Caco-2 (cell line): ENCODE measurements at regions of chr12 and their contacts with region 1.

Region 1: DNA sequence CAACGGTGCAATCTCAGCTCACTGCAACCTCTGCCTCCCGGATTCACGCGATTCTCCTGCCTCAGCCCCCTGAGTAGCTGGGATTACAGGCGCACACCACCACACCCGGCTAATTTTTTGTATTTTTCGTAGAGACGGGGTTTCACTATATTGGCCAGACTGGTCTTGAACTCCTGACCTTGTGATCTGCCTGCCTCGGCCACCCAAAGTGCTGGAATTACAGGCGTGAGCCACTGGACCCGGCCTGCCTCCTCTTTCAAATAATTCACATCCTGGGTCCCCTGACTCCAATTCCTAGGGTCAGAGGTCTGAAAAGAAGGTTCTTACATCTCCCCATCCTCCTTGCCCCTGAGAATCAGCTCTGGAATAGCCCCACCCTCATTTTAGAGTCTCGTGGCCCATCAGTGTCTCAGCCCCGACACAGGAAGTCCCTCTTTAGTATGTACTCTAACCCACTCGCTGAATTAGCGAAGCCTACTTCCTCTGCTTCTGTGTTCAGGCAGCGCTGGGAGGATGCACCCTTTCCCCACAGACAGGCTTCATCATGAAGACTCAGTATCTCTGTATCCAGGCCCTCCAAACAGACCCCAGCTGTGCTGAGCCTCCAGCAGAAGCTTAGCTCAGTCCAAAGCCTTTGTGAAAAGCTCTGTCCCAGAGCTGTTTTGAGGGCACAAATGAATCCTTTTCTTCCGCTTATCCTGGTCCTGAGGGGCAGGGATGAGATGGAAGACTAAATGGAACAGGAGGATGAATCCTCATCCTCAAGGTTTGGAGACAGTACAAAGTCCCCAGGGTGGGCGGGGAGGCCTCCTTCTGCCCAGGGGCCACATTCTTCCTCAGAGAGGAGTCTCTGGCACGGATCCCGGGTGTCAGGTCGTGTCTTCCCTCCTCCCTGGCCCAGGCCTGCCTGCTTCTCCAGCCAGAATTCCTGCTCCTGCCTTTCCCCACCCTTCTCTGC is 3.5 kb downstream of the LPAR5 start:
- DNase-seq: no peak
- H3K4me3 ChIP-seq: no peak overlapping the region
- H3K4me3 Mint-ChIP-seq: no peak overlapping the region
- H3K27ac Mint-ChIP-seq: no peak overlapping the region
- H3K4me1 ChIP-seq: peaks cover 10% of the 10 kb centered on the region
- H3K4me1 Mint-ChIP-seq: peaks cover 12% of the 10 kb centered on the region
- H3K27me3 ChIP-seq: no peaks in the 10 kb centered on the region
- H3K27me3 Mint-ChIP-seq: peaks cover 2% of the 10 kb centered on the region
- CTCF ChIP-seq: no peak

Region 2: DNA sequence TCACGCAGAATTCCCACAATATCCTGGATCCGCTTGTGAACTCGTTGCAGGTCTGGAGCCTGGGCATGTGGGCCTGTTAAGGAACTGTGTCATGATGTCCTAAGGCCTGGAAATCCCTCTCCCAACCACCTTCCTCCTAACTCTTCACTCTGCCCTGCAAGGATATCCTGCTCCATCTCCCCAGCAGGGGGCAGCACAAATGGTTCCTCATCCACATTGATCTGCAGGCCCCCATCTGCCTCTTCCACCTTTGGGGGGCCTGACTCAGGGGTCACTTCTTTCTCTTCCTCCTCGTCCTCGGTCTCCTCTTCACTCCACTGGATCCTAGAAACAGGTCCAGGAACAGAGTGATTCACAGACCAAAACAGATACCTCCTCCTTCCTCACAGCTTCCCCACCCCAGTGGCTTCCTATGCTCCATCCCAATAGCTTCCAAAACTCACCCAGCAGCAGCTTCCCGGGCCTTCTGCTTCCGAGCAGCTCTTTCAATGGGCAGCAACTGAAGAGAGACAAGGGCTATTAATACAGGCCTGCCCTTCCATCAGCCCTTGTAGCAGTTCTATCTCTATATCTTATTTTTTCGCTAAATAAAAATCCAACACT is 68.8 kb before region 1 on chr12:
- CTCF ChIA-PET with region 1: interaction called, 3 read pairs
- POLR2A ChIA-PET with region 1: interaction called, 10 read pairs
- intact Hi-C with region 1: no loop called
- DNase-seq: peak; percentile 63 to 80
- H3K4me3 ChIP-seq: no peak overlapping the region
- H3K4me3 Mint-ChIP-seq: no peak overlapping the region
- H3K27ac Mint-ChIP-seq: no peak overlapping the region
- H3K4me1 ChIP-seq: no peaks in the 10 kb centered on the region
- H3K4me1 Mint-ChIP-seq: peaks cover 9% of the 10 kb centered on the region
- H3K27me3 ChIP-seq: no peaks in the 10 kb centered on the region
- H3K27me3 Mint-ChIP-seq: no peaks in the 10 kb centered on the region
- CTCF ChIP-seq: peak; percentile 89 to 96

Region 3: GRCh38 chr12:6647083-6647604 is 14.8 kb after region 1 on chr12 and contains the start of gene ACRBP:
- CTCF ChIA-PET with region 1: no interaction called
- POLR2A ChIA-PET with region 1: no interaction called
- intact Hi-C with region 1: loop called (anchors 2 kb)
- DNase-seq: peak; percentile 62 to 75
- H3K4me3 ChIP-seq: peak within 1 kb of the TSS; percentile 26
- H3K4me3 Mint-ChIP-seq: peak within 1 kb of the TSS; percentile 79
- H3K27ac Mint-ChIP-seq: peak within 1 kb of the TSS; percentile 32
- H3K4me1 ChIP-seq: no peaks in the 10 kb centered on the region
- H3K4me1 Mint-ChIP-seq: peaks cover 7% of the 10 kb centered on the region
- H3K27me3 ChIP-seq: no peaks in the 10 kb centered on the region
- H3K27me3 Mint-ChIP-seq: peaks cover 6% of the 10 kb centered on the region
- CTCF ChIP-seq: no peak
- total RNA-seq, gene ACRBP: 0.73 and 1.3 TPM in 2 replicates